Sigmoid colon (tissue), 7 donors: ENCODE measurements at regions of chr11 and their contacts with region 1.

Region 1: GRCh38 chr11:113730887-113731726 is 25.0 kb upstream of the TMPRSS5 start:
- DNase-seq: no peak
- H3K4me3 ChIP-seq: no peak overlapping the region
- H3K27ac ChIP-seq: no peak overlapping the region
- H3K4me1 ChIP-seq: peaks cover 0 to 6% (median 0%) of the 10 kb centered on the region in 4 donors
- H3K27me3 ChIP-seq: no peaks in the 10 kb centered on the region
- CTCF ChIP-seq: peak in 3 of 4 experiments; percentile 21 to 70 (median 42)
- EP300 ChIP-seq: no peak
- POLR2A ChIP-seq: no peak

Region 2: DNA sequence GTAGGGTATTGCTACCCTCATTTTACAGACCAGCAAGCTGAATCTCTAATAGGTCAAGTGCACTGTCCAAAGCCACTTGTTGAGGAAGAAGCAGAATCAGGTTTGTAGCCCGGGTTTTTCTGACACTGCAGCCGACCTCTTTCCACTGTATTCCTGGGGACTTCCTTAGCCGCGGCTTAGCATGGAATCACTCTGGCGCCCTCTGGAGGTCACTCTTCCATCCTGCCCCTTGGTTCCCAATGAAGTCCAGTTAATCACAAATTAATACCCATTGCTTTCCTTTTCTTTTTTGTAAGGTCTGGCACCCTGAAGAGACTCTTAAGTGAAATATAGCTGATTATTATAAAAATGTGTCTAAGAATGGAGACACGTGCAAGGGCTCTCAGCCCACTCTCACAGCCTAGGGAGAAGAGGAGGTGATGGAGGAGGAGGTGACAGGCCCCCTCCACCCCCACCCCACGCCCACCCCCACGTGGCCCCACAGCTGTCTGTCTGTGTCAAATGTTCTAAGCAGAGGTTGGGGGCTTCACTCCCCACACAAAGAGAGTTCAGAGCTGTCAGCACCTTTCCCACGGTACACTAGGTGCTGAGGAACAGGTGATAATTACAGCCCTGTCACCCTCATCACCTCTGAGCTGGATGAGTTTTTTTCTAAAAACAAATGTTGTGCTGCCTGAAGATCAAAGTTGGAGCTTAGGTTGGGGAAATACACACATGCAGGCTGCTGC is 198.2 kb before region 1 on chr11:
- intact Hi-C with region 1: loop called (anchors 5 kb)
- DNase-seq: peak; percentile 77
- H3K4me3 ChIP-seq: no peak overlapping the region
- H3K27ac ChIP-seq: no peak overlapping the region
- H3K4me1 ChIP-seq: no peaks in the 10 kb centered on the region
- H3K27me3 ChIP-seq: no peaks in the 10 kb centered on the region
- CTCF ChIP-seq: peak; percentile 30 to 83 (median 62)
- EP300 ChIP-seq: no peak
- POLR2A ChIP-seq: no peak